ENCODE measurements at regions of chr7 and their contacts with region 1.

Region 1: DNA sequence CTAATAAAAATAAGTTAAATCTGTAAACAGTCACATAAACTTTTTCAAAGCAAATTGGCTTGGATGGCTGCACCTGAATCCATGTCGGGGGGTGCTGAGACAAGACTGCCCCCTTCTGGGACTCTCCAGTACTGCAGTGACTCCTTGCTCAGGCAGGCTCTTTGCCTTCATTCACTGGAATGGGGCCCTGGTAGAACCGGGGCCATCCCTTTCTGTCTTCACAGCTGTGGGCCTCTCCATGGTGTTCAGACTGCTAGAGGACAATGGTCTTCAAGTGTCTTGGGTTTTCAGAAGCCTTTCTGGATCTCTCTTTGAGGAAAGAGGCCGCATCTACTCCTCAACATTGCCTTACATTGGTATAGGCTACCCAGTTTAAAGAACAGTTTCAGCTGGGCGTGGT is 16.1 kb upstream of the IMPDH1 start:
- DNase-seq: peak; percentile 88 to 94 (median 92)
- ATAC-seq: peak; percentile 88
- H3K4me3 ChIP-seq: no peak overlapping the region
- H3K27ac ChIP-seq: no peak overlapping the region
- H3K4me1 ChIP-seq: peaks cover 5 to 9% of the 10 kb centered on the region in 2 experiments; a peak in 3 of 5 replicates
- H3K27me3 ChIP-seq: peaks cover 4 to 12% of the 10 kb centered on the region in 2 experiments; a peak in 2 of 5 replicates
- CTCF ChIP-seq: peak; percentile 96 to 99 (median 99)
- EP300 ChIP-seq: no peak
- POLR2A ChIP-seq: no peak
- RAD21 ChIP-seq: peak; percentile 99

Region 2: DNA sequence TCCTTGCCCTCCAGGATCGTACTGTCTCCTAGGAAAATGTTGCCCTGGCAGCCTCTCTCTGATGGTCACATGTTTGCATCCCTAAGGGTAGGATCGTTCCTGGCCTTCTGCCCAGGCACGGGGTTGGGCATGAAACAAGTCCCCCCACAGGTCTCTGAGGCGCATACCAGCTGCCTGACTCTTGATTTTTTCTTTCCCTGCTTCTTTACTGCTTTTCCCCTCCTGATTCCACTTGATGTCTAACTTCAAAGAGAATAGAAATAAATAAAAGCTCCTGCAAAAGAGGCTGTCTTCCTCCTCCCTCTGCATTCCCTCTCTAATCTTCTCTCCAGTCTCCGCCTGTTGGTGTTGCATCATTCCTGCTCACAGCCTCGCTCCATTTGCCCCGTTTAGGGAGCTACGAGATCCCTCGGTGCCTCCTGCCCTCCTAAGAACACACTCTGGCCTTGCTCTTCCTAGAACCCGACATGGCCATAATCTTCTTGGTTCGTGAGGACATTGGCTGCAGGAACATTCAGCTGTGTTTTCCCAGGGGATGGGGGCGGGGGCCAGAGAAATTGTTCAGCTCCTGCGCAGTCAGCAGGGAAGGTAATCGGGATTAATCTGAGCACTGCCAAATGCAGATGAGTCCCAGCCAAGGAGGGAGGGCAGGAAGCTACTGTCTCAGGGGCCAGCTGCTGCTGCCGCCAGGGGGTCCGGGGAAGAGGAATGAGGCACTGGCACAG is 158.8 kb before region 1 on chr7:
- CTCF ChIA-PET with region 1: no interaction called
- POLR2A ChIA-PET with region 1: no interaction called
- in situ Hi-C with region 1: no loop called
- intact Hi-C with region 1: no loop called
- DNase-seq: peak in 1 of 4 experiments; percentile 30
- ATAC-seq: peak; percentile 73
- H3K4me3 ChIP-seq: peak overlapping the region; percentile 23; the same call in 1 of the 2 replicates
- H3K27ac ChIP-seq: no peak overlapping the region; the same call in 2 of the 3 replicates
- H3K4me1 ChIP-seq: peaks cover 12 to 26% of the 10 kb centered on the region in 2 experiments
- H3K27me3 ChIP-seq: peaks cover 20 to 46% of the 10 kb centered on the region in 2 experiments; a peak in 4 of 5 replicates
- CTCF ChIP-seq: peak in 2 of 3 experiments; percentile 1 to 16; a peak in 1 of 6 replicates
- EP300 ChIP-seq: peak; percentile 45; the same call in 1 of the 2 replicates
- POLR2A ChIP-seq: no peak
- RAD21 ChIP-seq: peak in 1 of 2 experiments; percentile 19; a peak in 1 of 4 replicates

Region 3: DNA sequence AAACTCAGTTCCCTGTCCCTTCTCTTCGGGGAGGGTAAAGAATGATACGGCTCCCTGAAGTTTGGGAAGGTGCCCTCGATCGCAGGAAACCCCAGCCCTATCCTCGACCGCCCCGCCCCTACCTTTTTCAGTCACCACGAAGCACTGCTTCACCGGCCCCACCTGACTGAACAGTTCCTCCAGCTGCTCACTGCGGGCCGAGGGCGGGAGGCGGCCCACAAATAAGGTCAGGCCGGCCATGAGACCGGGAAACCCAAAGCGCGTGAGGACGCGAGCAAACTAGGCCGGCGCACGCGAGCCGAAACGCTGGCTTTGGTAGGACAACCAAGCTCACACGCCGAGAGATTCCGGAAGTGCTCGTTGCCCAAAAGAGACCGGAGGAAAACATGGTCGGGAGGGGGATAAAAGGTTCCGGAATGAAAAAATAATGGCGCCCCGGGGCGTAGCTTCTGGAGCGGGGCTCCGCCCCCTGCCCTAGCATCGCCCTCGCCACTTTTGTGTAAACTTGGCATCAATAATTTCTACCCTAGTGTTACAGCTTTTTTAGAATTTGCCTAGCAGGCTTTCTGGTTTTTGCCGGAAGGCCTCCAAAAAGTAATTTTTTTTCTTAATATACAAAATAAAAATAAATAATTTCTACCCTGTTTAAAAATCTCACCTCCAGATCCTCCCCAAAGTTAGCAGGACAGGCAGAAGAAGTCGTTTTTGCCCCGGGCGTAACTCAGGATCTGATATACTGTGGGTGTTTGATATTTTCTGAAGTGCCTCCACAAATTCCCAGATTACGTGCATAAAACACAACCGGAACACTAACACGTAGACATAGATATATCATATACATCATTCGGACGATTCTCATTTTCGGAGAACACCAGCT is 82.1 kb before region 1 on chr7 and contains the start of gene RBM28:
- CTCF ChIA-PET with region 1: interaction called, 12 read pairs
- POLR2A ChIA-PET with region 1: interaction called, 4 read pairs
- in situ Hi-C with region 1: no loop called
- intact Hi-C with region 1: loop called (anchors 1 kb)
- DNase-seq: peak; percentile 97 to 98 (median 98)
- ATAC-seq: peak; percentile 94
- H3K4me3 ChIP-seq: peak within 1 kb of the TSS; percentile 82
- H3K27ac ChIP-seq: peak within 1 kb of the TSS; percentile 81
- H3K4me1 ChIP-seq: peaks cover 3 to 13% of the 10 kb centered on the region in 2 experiments; a peak in 4 of 5 replicates
- H3K27me3 ChIP-seq: peaks cover 0 to 4% of the 10 kb centered on the region in 2 experiments; a peak in 2 of 5 replicates
- CTCF ChIP-seq: peak in 2 of 3 experiments; percentile 4 to 8; a peak in 1 of 6 replicates
- EP300 ChIP-seq: no peak; the same call in none of the 2 replicates
- POLR2A ChIP-seq: peak; percentile 99
- RAD21 ChIP-seq: peak in 1 of 2 experiments; percentile 11; a peak in 1 of 4 replicates
- polyA plus RNA-seq, gene RBM28: 65.8 to 122 TPM

Region 4: GRCh38 chr7:128409596-128410160 is 16.2 kb before region 1 on chr7 and contains the start of gene IMPDH1:
- CTCF ChIA-PET with region 1: interaction called, 3 read pairs
- POLR2A ChIA-PET with region 1: interaction called, 10 read pairs
- in situ Hi-C with region 1: no loop called
- intact Hi-C with region 1: no loop called
- DNase-seq: peak; percentile 89 to 100 (median 99)
- ATAC-seq: peak; percentile 89
- H3K4me3 ChIP-seq: peak within 1 kb of the TSS; percentile 49
- H3K27ac ChIP-seq: peak within 1 kb of the TSS; percentile 72
- H3K4me1 ChIP-seq: peaks cover 43 to 57% of the 10 kb centered on the region in 2 experiments
- H3K27me3 ChIP-seq: no peaks in the 10 kb centered on the region
- CTCF ChIP-seq: no peak
- EP300 ChIP-seq: no peak
- POLR2A ChIP-seq: peak; percentile 75
- RAD21 ChIP-seq: no peak
- polyA plus RNA-seq, gene IMPDH1: 0.80 to 2.1 TPM

Region 5: DNA sequence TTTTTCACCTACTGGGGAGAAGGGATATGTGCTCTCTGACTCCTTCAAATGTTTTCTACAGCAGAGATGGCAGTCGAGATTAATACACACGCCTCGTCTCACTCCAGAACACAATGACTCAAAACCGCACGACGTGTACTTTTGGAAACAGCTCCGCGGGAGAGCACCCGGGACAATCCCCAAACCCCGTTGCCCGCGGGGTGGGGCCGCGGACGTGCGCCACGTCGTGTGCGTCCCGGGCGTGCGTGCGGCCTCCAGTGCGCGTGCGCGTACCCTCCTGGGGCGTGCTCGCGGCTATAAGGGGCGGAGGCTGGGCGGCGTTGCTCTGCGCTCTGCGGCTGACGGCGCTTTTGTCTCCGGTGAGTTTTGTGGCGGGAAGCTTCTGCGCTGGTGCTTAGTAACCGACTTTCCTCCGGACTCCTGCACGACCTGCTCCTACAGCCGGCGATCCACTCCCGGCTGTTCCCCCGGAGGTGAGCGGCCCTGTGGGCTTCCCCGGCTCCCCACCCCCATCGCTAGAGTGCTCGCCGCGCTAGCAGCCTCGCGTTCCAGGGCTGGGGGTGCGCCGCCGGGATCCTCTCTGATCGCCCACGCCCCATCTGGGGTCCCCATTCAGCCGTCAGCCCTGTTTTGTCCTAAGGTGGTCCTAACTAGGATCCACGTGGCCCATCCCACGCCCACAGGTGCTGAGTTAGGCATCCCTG is 29.9 kb after region 1 on chr7 and contains the start of gene HILPDA:
- CTCF ChIA-PET with region 1: interaction called, 173 read pairs
- POLR2A ChIA-PET with region 1: interaction called, 8 read pairs
- in situ Hi-C with region 1: loop called (anchors 5 kb)
- intact Hi-C with region 1: loop called (anchors 1 kb)
- DNase-seq: peak; percentile 97 to 99 (median 99)
- ATAC-seq: peak; percentile 97
- H3K4me3 ChIP-seq: peak within 1 kb of the TSS; percentile 74
- H3K27ac ChIP-seq: peak within 1 kb of the TSS; percentile 85
- H3K4me1 ChIP-seq: peaks cover 25 to 30% of the 10 kb centered on the region in 2 experiments; a peak in 4 of 5 replicates
- H3K27me3 ChIP-seq: no peaks in the 10 kb centered on the region
- CTCF ChIP-seq: 0 out of 6 replicates have a peak, but pooled peaks of 1 of the 3 experiments have one; percentile 3
- EP300 ChIP-seq: no peak; the same call in none of the 2 replicates
- POLR2A ChIP-seq: peak; percentile 87
- RAD21 ChIP-seq: peak in 1 of 2 experiments; percentile 8; a peak in 1 of 4 replicates
- polyA plus RNA-seq, gene HILPDA: 28.6 to 40.5 TPM

Region 6: GRCh38 chr7:128666200-128666599 is 240.3 kb after region 1 on chr7:
- CTCF ChIA-PET with region 1: interaction called, 14 read pairs
- POLR2A ChIA-PET with region 1: interaction called, 3 read pairs
- in situ Hi-C with region 1: no loop called
- intact Hi-C with region 1: loop called (anchors 2 kb)
- DNase-seq: peak in 3 of 4 experiments; percentile 42 to 63 (median 56)
- ATAC-seq: peak; percentile 85
- H3K4me3 ChIP-seq: no peak overlapping the region
- H3K27ac ChIP-seq: no peak overlapping the region
- H3K4me1 ChIP-seq: no peaks in the 10 kb centered on the region
- H3K27me3 ChIP-seq: no peaks in the 10 kb centered on the region
- CTCF ChIP-seq: peak; percentile 47 to 69 (median 51); a peak in 5 of 6 replicates
- EP300 ChIP-seq: no peak
- POLR2A ChIP-seq: no peak
- RAD21 ChIP-seq: peak in 1 of 2 experiments; percentile 62; a peak in 2 of 4 replicates

Region 7: DNA sequence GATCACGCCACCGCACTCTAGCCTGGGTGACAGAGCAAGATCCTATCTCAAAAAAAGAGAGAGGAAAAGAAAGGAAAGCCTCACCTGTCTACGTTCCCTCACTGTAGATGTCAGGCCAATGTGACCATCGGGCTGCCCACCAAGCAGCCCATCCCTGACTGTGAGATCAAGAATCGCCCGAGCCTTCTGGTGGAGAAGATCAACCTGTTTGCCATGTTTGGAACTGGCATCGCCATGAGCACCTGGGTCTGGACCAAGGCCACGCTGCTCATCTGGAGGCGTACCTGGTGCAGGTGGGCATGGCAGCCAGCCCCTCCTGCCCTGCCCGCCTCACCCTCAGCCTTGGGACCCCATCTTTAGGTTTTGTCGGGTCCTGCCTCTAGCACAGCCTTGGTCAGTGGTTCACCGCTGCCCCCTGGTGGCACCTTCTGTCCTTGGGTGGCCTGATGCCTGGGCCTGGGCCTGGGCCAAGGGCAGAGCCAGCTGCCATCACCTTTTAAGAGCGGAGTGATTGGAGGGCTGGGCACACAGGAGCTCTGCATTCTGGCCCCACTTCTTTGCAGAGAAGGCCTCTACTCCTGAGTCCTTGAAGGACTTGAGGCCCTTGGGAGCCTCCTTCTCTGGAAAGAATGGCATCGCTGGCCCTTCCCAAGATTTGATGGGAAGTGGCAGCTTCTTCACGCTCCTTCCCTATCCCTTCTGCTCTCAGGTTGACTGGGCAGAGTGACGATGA is 784.6 kb after region 1 on chr7:
- CTCF ChIA-PET with region 1: interaction called, 8 read pairs
- POLR2A ChIA-PET with region 1: no interaction called
- in situ Hi-C with region 1: no loop called
- intact Hi-C with region 1: loop called (anchors 1 kb)
- DNase-seq: peak; percentile 82 to 88 (median 86)
- ATAC-seq: peak; percentile 90
- H3K4me3 ChIP-seq: no peak overlapping the region
- H3K27ac ChIP-seq: no peak overlapping the region
- H3K4me1 ChIP-seq: peaks cover 5 to 7% of the 10 kb centered on the region in 2 experiments; a peak in 3 of 5 replicates
- H3K27me3 ChIP-seq: peaks cover 52 to 75% of the 10 kb centered on the region in 2 experiments
- CTCF ChIP-seq: peak; percentile 93 to 94 (median 94)
- EP300 ChIP-seq: no peak
- POLR2A ChIP-seq: no peak
- RAD21 ChIP-seq: peak; percentile 84 to 94

Measured in K562 (cell line).